ENCODE measurements at regions of chr17 and their contacts with region 1.

Region 1: DNA sequence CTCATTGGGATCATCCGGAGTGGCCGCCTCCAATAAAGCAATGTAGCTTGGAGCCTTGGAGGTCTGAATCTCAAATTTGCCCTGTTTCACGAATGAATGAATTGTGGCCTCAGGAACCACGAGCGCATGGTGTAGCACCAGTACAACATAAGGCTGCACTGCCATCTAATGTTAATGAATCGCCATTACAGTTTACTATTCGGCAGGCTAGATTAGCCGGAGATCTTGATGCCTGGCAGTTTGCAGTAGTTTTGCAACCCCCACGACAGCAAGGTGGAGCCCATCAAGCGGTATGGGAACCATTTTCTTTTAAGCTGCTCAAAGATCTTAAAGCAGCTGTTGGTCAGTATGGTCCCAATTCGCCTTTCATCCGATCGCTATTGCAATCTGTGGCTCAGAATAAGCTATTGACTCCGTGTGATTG is 18.8 kb downstream of the ALOX15B start:
- DNase-seq: peak in 7 of 9 experiments; percentile 15 to 83 (median 51)
- ATAC-seq: peak; percentile 93
- H3K4me3 ChIP-seq: no peak overlapping the region
- H3K4me3 Mint-ChIP-seq: no peak overlapping the region
- H3K27ac ChIP-seq: no peak overlapping the region
- H3K27ac Mint-ChIP-seq: no peak overlapping the region
- H3K4me1 ChIP-seq: no peaks in the 10 kb centered on the region
- H3K4me1 Mint-ChIP-seq: peaks cover 12% of the 10 kb centered on the region
- H3K27me3 ChIP-seq: peaks cover 0 to 8% of the 10 kb centered on the region in 2 experiments
- H3K27me3 Mint-ChIP-seq: peaks cover 57% of the 10 kb centered on the region
- CTCF ChIP-seq: peak; percentile 69

Region 2: DNA sequence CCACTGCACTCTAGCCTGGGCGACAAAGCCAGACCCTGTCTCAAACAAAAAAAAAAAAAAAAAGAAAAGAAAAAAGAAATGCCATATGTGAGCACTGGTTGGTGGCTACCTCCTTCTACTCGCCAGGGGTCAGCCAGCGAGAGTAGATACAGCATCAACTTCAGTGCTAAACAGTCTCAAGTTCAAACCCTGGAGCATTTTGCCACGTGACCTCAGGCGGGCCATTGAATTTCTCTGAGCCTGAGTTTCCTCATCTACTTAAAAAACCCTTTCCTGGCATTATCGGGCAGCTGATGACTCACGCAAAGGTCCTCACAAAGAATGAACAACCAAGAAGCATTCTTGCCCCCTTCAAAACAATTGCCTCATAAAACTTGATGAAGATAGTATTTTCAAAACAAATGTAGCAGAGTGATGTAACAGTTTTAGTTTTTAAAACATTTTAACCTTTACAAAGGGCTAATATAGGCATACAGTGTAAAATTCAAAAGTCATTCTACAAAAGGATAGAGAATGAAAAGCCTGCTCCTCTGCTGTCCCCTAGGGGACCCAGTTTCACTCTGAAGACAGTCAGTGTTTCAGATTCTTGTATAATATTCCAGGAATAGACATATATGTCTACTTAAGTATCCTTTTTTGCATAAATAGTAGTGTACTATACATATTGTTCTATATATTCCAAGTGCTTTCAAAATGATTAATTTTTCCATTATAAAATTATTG is 311.8 kb before region 1 on chr17:
- CTCF ChIA-PET with region 1: interaction called, 11 read pairs
- POLR2A ChIA-PET with region 1: no interaction called
- intact Hi-C with region 1: loop called (anchors 1 to 2 kb)
- DNase-seq: no peak
- ATAC-seq: no peak
- H3K4me3 ChIP-seq: no peak overlapping the region
- H3K4me3 Mint-ChIP-seq: no peak overlapping the region
- H3K27ac ChIP-seq: no peak overlapping the region
- H3K27ac Mint-ChIP-seq: no peak overlapping the region
- H3K4me1 ChIP-seq: no peaks in the 10 kb centered on the region
- H3K4me1 Mint-ChIP-seq: no peaks in the 10 kb centered on the region
- H3K27me3 ChIP-seq: no peaks in the 10 kb centered on the region
- H3K27me3 Mint-ChIP-seq: peaks cover 16% of the 10 kb centered on the region
- CTCF ChIP-seq: no peak

Region 3: DNA sequence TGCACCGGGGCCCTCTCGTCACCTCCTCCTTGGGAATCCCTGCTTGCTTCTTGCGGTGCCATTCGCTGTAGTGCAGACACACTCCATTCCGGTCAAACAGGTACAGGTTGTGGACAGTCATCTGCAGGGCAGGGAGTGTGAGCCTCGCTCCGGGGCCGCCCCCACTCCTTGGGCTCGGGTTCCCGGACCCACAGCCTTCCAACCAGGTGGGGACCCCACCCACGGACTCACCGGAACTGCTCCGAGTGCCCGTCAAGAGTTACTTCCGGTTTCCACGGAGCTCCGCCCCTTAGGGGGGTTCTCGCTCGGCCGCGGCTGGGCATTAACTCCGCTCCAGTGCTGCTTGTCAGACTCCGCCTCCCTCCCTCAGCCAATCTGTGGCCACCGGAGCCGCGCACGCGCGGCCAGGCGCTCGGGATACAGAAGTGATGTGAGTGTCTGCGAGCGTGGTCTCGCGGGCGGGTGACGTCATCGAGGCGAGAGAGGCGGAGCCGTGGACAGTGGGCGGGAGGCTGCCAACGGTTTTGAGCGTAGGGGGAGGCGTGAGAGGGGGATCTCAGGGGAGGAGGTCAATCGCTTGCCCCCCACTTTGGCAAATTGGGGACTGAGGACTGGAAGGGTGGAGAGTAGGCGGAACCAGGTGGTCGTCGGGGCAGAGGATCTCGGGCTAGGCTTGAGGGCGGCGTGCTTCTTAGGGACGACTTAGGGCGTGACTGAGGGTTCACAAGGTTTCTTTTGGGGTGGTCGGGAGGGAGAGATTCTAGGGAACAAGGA is 125.8 kb before region 1 on chr17 and contains the starts of genes CNTROB and TRAPPC1:
- CTCF ChIA-PET with region 1: interaction called, 4 read pairs
- POLR2A ChIA-PET with region 1: no interaction called
- intact Hi-C with region 1: loop called in 1 of 2 experiments (anchors 5 kb)
- DNase-seq: peak; percentile 99 to 100 (median 99)
- ATAC-seq: peak; percentile 93
- H3K4me3 ChIP-seq: peak within 1 kb of the TSS; percentile 96
- H3K4me3 Mint-ChIP-seq: peak within 1 kb of the TSS; percentile 100
- H3K27ac ChIP-seq: peak within 1 kb of the TSS; percentile 85
- H3K27ac Mint-ChIP-seq: peak within 1 kb of the TSS; percentile 99
- H3K4me1 ChIP-seq: peaks cover 22% of the 10 kb centered on the region
- H3K4me1 Mint-ChIP-seq: peaks cover 50% of the 10 kb centered on the region
- H3K27me3 ChIP-seq: no peaks in the 10 kb centered on the region
- H3K27me3 Mint-ChIP-seq: no peaks in the 10 kb centered on the region
- CTCF ChIP-seq: no peak
- total RNA-seq, gene CNTROB: 20.1 to 23.6 TPM
- total RNA-seq, gene TRAPPC1: 29.6 to 39.4 TPM

Region 4: GRCh38 chr17:8031261-8031661 is 26.4 kb before region 1 on chr17:
- CTCF ChIA-PET with region 1: interaction called, 12 read pairs
- POLR2A ChIA-PET with region 1: no interaction called
- intact Hi-C with region 1: no loop called
- DNase-seq: no peak
- ATAC-seq: no peak
- H3K4me3 ChIP-seq: no peak overlapping the region
- H3K4me3 Mint-ChIP-seq: no peak overlapping the region
- H3K27ac ChIP-seq: no peak overlapping the region
- H3K27ac Mint-ChIP-seq: no peak overlapping the region
- H3K4me1 ChIP-seq: no peaks in the 10 kb centered on the region
- H3K4me1 Mint-ChIP-seq: no peaks in the 10 kb centered on the region
- H3K27me3 ChIP-seq: peaks cover 0 to 3% of the 10 kb centered on the region in 2 experiments
- H3K27me3 Mint-ChIP-seq: peaks cover 45% of the 10 kb centered on the region
- CTCF ChIP-seq: no peak

Region 5: DNA sequence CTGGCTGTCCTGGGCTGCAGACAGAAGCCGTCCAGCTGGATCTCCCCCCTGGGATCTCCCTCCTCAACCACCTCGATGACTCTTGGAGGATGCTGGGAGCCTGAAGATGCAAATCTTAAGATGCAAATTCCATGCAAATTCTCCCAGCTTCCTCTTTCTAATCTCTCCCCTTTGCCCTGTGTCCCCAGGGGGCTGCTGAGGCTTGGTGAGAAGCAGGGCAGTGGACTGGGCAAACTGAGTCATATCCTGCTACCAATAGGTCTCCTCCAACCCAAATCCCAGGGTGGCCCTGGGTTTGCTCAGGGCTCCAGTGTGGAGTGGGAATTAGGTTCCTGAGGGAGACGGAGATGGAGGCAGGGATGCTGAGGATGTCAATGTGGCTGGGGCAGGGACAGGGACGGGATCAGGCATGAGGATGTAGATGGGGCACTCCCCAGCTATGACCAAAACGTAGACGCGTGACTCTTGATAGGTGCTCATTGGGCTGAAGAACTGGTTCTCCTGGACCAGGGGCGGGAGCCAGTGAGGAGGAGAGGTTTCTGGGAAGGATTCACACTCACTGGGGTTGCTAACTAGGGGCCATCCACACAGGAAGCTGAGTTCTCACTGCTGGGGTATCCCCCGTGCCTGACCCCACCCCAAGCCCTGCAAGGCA is 33.5 kb after region 1 on chr17:
- CTCF ChIA-PET with region 1: interaction called, 56 read pairs
- POLR2A ChIA-PET with region 1: no interaction called
- intact Hi-C with region 1: no loop called
- DNase-seq: peak in 1 of 9 experiments; percentile 28
- ATAC-seq: no peak
- H3K4me3 ChIP-seq: no peak overlapping the region
- H3K4me3 Mint-ChIP-seq: no peak overlapping the region
- H3K27ac ChIP-seq: no peak overlapping the region
- H3K27ac Mint-ChIP-seq: no peak overlapping the region
- H3K4me1 ChIP-seq: peaks cover 11% of the 10 kb centered on the region
- H3K4me1 Mint-ChIP-seq: peaks cover 8% of the 10 kb centered on the region
- H3K27me3 ChIP-seq: peaks cover 0 to 5% of the 10 kb centered on the region in 2 experiments
- H3K27me3 Mint-ChIP-seq: peaks cover 33% of the 10 kb centered on the region
- CTCF ChIP-seq: no peak

Region 6: DNA sequence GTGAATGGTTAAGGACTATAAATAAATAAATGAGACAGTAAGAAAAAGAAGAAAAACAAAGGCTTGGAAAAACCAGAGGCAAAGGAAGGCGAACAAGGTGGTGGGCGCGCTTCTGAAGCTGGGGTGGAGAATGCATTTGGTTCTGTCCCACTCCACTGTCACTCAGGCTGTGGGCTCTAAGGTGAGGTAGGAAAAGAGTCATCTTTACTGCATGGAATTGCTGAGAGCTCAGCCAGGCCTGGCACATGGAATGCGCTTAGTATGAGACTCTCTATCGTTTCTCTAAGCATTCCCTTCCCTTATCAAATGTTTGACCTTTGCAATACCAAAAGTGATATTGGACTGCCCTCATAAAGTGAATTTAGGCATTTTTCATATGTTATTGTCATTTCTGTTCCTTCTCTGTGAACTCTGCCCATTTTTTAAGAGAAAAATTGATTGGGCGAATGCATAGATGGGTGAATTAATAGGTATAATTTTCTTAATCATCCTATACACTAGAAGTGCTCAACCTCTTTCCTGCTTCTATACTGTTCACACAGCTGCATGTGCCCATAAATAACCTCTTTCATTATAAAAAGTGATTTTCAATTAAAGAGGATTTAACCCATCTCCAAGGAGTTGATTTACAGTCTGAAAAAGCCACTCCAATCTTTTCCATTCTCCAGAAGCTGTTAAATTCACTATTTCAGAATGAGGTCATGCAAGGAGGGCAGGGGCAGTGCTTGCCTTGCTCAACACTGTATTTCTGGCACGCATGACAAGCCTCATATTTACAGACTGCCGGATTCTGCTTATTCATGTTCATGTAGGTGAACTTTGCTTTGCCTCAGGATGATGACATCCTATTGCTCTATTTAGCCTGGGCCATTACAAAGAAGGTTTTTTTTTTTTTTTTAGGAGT is 485.1 kb after region 1 on chr17:
- CTCF ChIA-PET with region 1: no interaction called
- POLR2A ChIA-PET with region 1: no interaction called
- intact Hi-C with region 1: no loop called
- DNase-seq: no peak
- ATAC-seq: no peak
- H3K4me3 ChIP-seq: no peak overlapping the region
- H3K4me3 Mint-ChIP-seq: no peak overlapping the region
- H3K27ac ChIP-seq: no peak overlapping the region
- H3K27ac Mint-ChIP-seq: no peak overlapping the region
- H3K4me1 ChIP-seq: no peaks in the 10 kb centered on the region
- H3K4me1 Mint-ChIP-seq: no peaks in the 10 kb centered on the region
- H3K27me3 ChIP-seq: no peaks in the 10 kb centered on the region
- H3K27me3 Mint-ChIP-seq: no peaks in the 10 kb centered on the region
- CTCF ChIP-seq: no peak

Region 7: DNA sequence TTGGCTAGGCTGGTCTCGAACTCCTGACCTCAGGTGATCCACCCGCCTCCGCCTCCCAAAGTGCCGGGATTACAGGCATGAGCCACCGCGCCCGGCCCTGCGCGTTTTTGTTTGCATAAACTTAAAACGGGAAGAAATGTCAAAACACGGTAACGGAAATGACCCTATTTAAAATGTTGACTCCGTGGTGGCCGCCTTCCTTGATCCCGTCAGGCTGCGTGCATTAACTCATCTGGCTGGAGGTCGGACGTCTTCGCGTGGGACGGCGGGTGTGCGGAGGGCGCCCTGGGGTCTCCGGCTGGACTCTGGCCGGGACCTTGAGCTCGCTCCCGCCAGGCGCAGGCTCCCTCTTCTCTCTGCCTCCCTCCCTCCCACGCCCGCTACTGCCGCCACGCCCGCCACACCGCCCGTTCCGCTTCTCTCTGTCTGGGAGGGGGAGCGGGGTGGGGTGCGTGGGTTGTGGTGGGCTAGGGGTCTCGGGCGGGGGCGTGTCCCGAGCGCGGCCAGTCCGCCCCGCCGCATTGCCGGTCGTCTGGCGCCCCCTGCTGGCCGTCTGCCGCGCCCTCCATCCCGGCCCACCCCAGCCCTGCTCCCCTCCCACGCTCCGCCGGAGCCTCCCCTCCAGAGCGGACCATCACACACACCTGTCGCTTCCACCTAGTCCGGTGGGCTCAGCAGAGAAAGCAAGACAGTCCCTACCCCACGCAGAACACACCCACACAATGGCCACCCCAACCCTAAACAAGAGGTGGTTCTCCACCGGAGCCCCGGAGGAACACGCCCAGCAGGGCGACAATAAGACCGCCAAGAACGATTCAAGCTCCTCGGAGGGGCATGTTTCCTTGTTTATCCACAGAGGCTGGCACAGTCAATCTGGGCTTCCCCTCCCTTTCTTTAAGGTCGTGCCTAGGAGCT is 688.1 kb after region 1 on chr17:
- CTCF ChIA-PET with region 1: interaction called, 3 read pairs
- POLR2A ChIA-PET with region 1: no interaction called
- intact Hi-C with region 1: loop called (anchors 10 kb)
- DNase-seq: peak; percentile 56 to 91 (median 82)
- ATAC-seq: peak; percentile 72
- H3K4me3 ChIP-seq: peak overlapping the region; percentile 74 to 77
- H3K4me3 Mint-ChIP-seq: peak overlapping the region; percentile 94
- H3K27ac ChIP-seq: peak overlapping the region; percentile 69 to 82
- H3K27ac Mint-ChIP-seq: peak overlapping the region; percentile 94
- H3K4me1 ChIP-seq: peaks cover 15% of the 10 kb centered on the region
- H3K4me1 Mint-ChIP-seq: peaks cover 25% of the 10 kb centered on the region
- H3K27me3 ChIP-seq: no peaks in the 10 kb centered on the region
- H3K27me3 Mint-ChIP-seq: no peaks in the 10 kb centered on the region
- CTCF ChIP-seq: peak; percentile 94